Gastrocnemius medialis (tissue), 4 donors: ENCODE measurements at regions of chr20 and their contacts with region 1.

Region 1: DNA sequence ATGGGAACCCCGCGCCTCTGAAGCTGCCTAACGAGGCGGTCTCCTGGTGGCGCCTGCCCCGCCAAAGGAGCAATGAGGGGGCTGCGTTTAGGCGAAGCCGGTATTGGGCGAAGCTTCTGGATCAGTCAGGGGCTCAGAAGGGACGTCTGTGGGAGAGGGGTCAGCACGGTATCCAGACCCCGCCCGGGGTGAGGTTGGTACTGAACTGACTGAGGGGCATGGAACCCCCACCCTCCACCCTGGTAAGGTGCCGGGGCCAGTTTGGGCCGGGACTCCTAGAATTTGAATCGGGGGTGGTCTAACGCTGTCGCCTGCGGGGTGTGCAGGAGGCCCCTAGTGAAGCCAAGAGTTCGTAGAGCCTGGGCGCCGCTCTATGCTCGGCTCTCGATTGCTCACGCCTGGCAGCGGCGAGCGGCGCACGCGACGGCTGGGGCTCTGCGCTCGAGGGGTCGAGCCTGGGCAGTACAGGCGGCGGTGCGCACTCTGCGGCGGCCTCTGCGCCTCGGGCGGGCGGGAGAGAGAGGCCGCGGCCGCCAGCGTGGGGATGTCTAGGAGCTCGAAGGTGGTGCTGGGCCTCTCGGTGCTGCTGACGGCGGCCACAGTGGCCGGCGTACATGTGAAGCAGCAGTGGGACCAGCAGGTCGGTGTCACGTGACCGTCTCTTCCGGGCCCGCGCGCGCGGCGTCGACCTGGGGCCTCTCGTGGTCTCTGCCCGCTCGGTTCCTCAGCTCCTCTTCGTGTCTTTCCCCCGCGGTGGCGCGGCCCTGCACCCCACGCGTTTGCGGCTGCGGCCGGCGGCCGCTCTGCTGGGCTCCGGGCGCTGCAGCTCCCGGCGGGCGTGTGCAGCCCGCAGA is at the starts of genes KAT14 and PET117:
- DNase-seq: peak; percentile 68 to 79
- ATAC-seq: peak; percentile 95 to 97
- H3K4me3 ChIP-seq: peak within 1 kb of the TSS; percentile 72 to 89 (median 84)
- H3K27ac ChIP-seq: peak within 1 kb of the TSS; percentile 83 to 96 (median 94)
- H3K4me1 ChIP-seq: peaks cover 22 to 26% of the 10 kb centered on the region in 2 donors
- H3K27me3 ChIP-seq: no peaks in the 10 kb centered on the region
- CTCF ChIP-seq: peak in 2 of 5 experiments; percentile 46 to 58
- POLR2A ChIP-seq: peak; percentile 52 to 64
- total RNA-seq, gene KAT14: 12.6 to 29.7 (median 19.8) TPM
- total RNA-seq, gene PET117: 14.4 to 28.2 (median 16.7) TPM

Region 2: DNA sequence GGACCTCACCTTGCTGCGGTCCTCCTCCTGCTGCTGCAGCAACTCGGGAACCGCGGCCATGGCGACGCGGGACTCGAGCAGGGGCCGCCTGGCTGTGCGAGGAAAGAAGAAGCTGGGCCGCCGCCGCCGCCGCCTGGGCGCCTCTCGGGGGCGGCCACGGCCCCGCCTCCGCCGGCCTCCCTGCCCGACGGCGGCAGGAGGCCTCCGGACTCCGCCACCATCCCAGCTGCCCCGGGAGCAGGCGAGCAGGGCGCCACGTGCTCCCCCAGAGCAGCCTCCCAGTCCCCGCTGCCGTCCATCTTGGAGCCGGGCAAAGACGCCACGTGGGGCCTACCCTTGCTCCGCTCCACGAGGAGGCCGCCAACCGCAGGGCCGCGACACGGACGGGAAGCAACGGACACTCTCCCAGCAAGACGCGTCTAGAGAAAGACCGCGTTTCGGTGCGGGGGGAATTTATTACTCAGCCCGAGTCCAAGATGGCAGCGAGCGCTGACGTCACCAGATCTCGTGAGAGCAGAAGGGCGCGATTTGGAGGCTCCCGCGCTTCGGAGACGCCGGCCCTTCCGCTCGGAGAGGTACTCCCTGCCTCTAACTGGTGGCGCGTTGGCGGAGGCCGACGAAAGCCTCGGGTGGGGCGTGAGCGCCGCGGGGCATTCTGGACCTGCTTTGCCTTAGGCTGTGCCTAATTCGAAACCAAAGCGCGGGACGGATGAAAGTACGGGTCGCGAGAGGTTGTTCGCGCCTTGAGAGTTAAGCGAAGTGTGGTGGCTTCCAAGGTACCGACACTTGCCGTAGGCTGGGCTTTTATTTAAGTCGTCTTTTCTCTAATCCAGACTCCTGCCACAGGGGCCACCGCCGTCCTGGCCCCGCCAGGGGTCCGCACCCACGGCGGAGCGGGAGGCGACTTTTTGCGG is 169.0 kb before region 1 on chr20 and contains the starts of genes MGME1 and SNX5:
- in situ Hi-C with region 1: loop called in 1 of 4 experiments (anchors 25 kb)
- intact Hi-C with region 1: loop called (anchors 5 kb)
- DNase-seq: peak; percentile 99
- ATAC-seq: peak; percentile 82 to 85
- H3K4me3 ChIP-seq: peak within 1 kb of the TSS; percentile 91 to 97 (median 94)
- H3K27ac ChIP-seq: peak within 1 kb of the TSS; percentile 93 to 99 (median 96)
- H3K4me1 ChIP-seq: peaks cover 75 to 76% of the 10 kb centered on the region in 2 donors
- H3K27me3 ChIP-seq: no peaks in the 10 kb centered on the region
- CTCF ChIP-seq: no peak
- POLR2A ChIP-seq: peak; percentile 55 to 68
- total RNA-seq, gene MGME1: 5.2 to 9.1 (median 7.2) TPM
- total RNA-seq, gene SNX5: 49.8 to 88.8 (median 60.9) TPM

Region 3: GRCh38 chr20:18101125-18101810 is 36.4 kb before region 1 on chr20:
- in situ Hi-C with region 1: no loop called
- intact Hi-C with region 1: no loop called
- DNase-seq: no peak
- ATAC-seq: no peak
- H3K4me3 ChIP-seq: no peak overlapping the region
- H3K27ac ChIP-seq: no peak overlapping the region
- H3K4me1 ChIP-seq: no peaks in the 10 kb centered on the region
- H3K27me3 ChIP-seq: no peaks in the 10 kb centered on the region
- CTCF ChIP-seq: no peak
- POLR2A ChIP-seq: no peak

Region 4: DNA sequence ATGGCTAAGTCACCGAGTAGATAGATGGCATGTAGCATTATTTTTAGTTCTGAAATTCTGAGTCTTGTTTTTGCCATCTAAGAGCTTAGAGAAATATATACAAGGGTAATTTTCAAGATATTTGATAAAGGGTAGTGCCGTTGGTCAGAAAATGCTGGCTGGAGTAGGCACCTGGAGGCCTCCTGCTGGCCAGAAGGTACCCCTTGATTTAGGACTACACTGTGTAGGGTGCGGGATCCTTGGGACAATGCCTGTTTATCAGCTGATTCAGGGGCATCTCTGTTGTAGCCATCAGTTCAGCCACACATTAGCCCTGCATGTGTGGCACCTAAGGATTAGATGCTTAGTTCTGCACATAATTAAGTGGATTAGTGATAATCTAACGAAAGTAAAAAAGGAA is 12.6 kb after region 1 on chr20:
- in situ Hi-C with region 1: no loop called
- intact Hi-C with region 1: loop called (anchors 2 kb)
- DNase-seq: no peak
- ATAC-seq: no peak
- H3K4me3 ChIP-seq: no peak overlapping the region
- H3K27ac ChIP-seq: no peak overlapping the region
- H3K4me1 ChIP-seq: peaks cover 3 to 11% of the 10 kb centered on the region in 2 donors
- H3K27me3 ChIP-seq: no peaks in the 10 kb centered on the region
- CTCF ChIP-seq: no peak
- POLR2A ChIP-seq: no peak

Region 5: GRCh38 chr20:18466894-18467730 is 329.5 kb after region 1 on chr20 and contains the starts of genes DZANK1 and POLR3F:
- in situ Hi-C with region 1: loop called in 1 of 4 experiments (anchors 25 kb)
- intact Hi-C with region 1: no loop called
- DNase-seq: peak; percentile 83 to 94
- ATAC-seq: peak; percentile 99 to 100
- H3K4me3 ChIP-seq: peak within 1 kb of the TSS; percentile 75 to 98 (median 91)
- H3K27ac ChIP-seq: peak within 1 kb of the TSS; percentile 77 to 93 (median 85)
- H3K4me1 ChIP-seq: peaks cover 19 to 21% of the 10 kb centered on the region in 2 donors
- H3K27me3 ChIP-seq: no peaks in the 10 kb centered on the region
- CTCF ChIP-seq: no peak
- POLR2A ChIP-seq: peak in 1 of 2 donors; percentile 37
- total RNA-seq, gene DZANK1: 0.18 to 1.0 (median 0.62) TPM
- total RNA-seq, gene POLR3F: 6.0 to 8.7 (median 6.8) TPM

Region 6: GRCh38 chr20:18511571-18511970 is 373.9 kb after region 1 on chr20:
- in situ Hi-C with region 1: no loop called
- intact Hi-C with region 1: no loop called
- DNase-seq: no peak
- ATAC-seq: no peak
- H3K4me3 ChIP-seq: no peak overlapping the region
- H3K27ac ChIP-seq: no peak overlapping the region
- H3K4me1 ChIP-seq: peaks cover 8 to 10% of the 10 kb centered on the region in 2 donors
- H3K27me3 ChIP-seq: no peaks in the 10 kb centered on the region
- CTCF ChIP-seq: no peak
- POLR2A ChIP-seq: no peak